ENCODE measurements at regions of chr11 and their contacts with region 1.

Region 1: GRCh38 chr11:71448257-71449171 is at the start of gene DHCR7:
- DNase-seq: peak; percentile 81 to 96 (median 88)
- ATAC-seq: peak; percentile 85
- H3K4me3 ChIP-seq: peak within 1 kb of the TSS; percentile 86
- H3K4me3 Mint-ChIP-seq: peak within 1 kb of the TSS; percentile 89 to 98 (median 94)
- H3K27ac ChIP-seq: peak within 1 kb of the TSS; percentile 92
- H3K27ac Mint-ChIP-seq: peak within 1 kb of the TSS; percentile 88 to 99 (median 95)
- H3K4me1 ChIP-seq: peaks cover 27 to 37% of the 10 kb centered on the region in 2 donors
- H3K4me1 Mint-ChIP-seq: peaks cover 27 to 58% (median 49%) of the 10 kb centered on the region in 7 donors
- H3K27me3 ChIP-seq: no peaks in the 10 kb centered on the region
- H3K27me3 Mint-ChIP-seq: no peaks in the 10 kb centered on the region
- total RNA-seq, gene DHCR7: 14.7 to 46.1 (median 19.6) TPM

Region 2: DNA sequence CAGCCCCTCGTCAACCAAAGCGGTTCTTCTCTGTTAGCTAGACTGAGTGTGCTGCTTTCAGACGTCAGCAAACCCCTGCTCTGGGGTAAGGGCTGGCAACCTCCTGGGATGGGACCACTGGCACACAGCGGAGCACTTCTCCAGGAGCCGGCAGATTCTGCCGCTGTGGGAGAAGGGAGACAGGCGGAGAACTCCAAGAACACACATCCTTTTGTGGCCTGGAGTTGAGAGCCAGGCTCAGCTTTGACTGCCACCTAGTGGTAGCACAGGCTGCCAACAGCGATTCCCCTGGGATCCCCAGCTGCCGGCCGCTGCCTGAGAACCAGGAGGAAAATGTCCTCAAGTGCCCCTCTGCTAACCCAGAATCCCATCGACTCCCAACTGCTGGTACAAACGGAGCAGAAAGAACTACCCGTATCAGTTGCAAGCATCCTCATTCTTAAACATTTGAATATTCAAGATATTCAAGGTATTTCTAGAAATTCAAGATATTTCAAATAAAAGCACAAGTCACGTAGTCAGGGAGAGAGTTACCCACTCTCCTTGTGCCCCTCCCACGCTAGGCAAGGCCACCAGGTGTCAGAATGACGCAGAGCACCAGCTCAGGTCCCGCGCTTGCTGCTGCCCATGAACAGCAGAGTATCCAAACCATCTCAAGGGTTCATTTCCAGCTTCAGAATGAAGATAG is 1778.2 kb before region 1 on chr11:
- CTCF ChIA-PET with region 1: no interaction called
- POLR2A ChIA-PET with region 1: no interaction called
- intact Hi-C with region 1: loop called (anchors 5 to 10 kb)
- DNase-seq: peak; percentile 25 to 57 (median 43)
- ATAC-seq: peak; percentile 36
- H3K4me3 ChIP-seq: no peak overlapping the region
- H3K4me3 Mint-ChIP-seq: no peak overlapping the region
- H3K27ac ChIP-seq: no peak overlapping the region
- H3K27ac Mint-ChIP-seq: peak overlapping the region in 6 of 9 donors; percentile 5 to 84 (median 65)
- H3K4me1 ChIP-seq: peaks cover 15 to 19% of the 10 kb centered on the region in 2 donors
- H3K4me1 Mint-ChIP-seq: peaks cover 24 to 42% (median 33%) of the 10 kb centered on the region in 7 donors
- H3K27me3 ChIP-seq: no peaks in the 10 kb centered on the region
- H3K27me3 Mint-ChIP-seq: peaks cover 0 to under 1% (median 0%) of the 10 kb centered on the region in 5 donors

Region 3: GRCh38 chr11:69675811-69676371 is 1772.6 kb before region 1 on chr11:
- CTCF ChIA-PET with region 1: no interaction called
- POLR2A ChIA-PET with region 1: no interaction called
- intact Hi-C with region 1: loop called (anchors 5 to 10 kb)
- DNase-seq: no peak
- ATAC-seq: no peak
- H3K4me3 ChIP-seq: peak overlapping the region; percentile 75
- H3K4me3 Mint-ChIP-seq: peak overlapping the region; percentile 91 to 97 (median 94)
- H3K27ac ChIP-seq: peak overlapping the region; percentile 85
- H3K27ac Mint-ChIP-seq: peak overlapping the region in 3 of 9 donors; percentile 90 to 95 (median 92)
- H3K4me1 ChIP-seq: peaks cover 15 to 19% of the 10 kb centered on the region in 2 donors
- H3K4me1 Mint-ChIP-seq: peaks cover 16 to 37% (median 25%) of the 10 kb centered on the region in 7 donors
- H3K27me3 ChIP-seq: no peaks in the 10 kb centered on the region
- H3K27me3 Mint-ChIP-seq: peaks cover 0 to 13% (median 0%) of the 10 kb centered on the region in 5 donors

Region 4: GRCh38 chr11:70202898-70203748 is 1245.4 kb before region 1 on chr11 and contains the start of gene FADD:
- CTCF ChIA-PET with region 1: no interaction called
- POLR2A ChIA-PET with region 1: no interaction called
- intact Hi-C with region 1: loop called in 1 of 2 experiments (anchors 2 kb)
- DNase-seq: peak; percentile 86 to 93 (median 90)
- ATAC-seq: peak; percentile 77
- H3K4me3 ChIP-seq: peak within 1 kb of the TSS; percentile 97
- H3K4me3 Mint-ChIP-seq: peak within 1 kb of the TSS; percentile 92 to 99 (median 96)
- H3K27ac ChIP-seq: peak within 1 kb of the TSS; percentile 81
- H3K27ac Mint-ChIP-seq: peak within 1 kb of the TSS; percentile 93 to 99 (median 97)
- H3K4me1 ChIP-seq: peaks cover 21 to 34% of the 10 kb centered on the region in 2 donors
- H3K4me1 Mint-ChIP-seq: peaks cover 28 to 54% (median 36%) of the 10 kb centered on the region in 7 donors
- H3K27me3 ChIP-seq: no peaks in the 10 kb centered on the region
- H3K27me3 Mint-ChIP-seq: peaks cover 0 to 6% (median 0%) of the 10 kb centered on the region in 5 donors
- total RNA-seq, gene FADD: 9.6 to 40.9 (median 38.4) TPM

Region 5: DNA sequence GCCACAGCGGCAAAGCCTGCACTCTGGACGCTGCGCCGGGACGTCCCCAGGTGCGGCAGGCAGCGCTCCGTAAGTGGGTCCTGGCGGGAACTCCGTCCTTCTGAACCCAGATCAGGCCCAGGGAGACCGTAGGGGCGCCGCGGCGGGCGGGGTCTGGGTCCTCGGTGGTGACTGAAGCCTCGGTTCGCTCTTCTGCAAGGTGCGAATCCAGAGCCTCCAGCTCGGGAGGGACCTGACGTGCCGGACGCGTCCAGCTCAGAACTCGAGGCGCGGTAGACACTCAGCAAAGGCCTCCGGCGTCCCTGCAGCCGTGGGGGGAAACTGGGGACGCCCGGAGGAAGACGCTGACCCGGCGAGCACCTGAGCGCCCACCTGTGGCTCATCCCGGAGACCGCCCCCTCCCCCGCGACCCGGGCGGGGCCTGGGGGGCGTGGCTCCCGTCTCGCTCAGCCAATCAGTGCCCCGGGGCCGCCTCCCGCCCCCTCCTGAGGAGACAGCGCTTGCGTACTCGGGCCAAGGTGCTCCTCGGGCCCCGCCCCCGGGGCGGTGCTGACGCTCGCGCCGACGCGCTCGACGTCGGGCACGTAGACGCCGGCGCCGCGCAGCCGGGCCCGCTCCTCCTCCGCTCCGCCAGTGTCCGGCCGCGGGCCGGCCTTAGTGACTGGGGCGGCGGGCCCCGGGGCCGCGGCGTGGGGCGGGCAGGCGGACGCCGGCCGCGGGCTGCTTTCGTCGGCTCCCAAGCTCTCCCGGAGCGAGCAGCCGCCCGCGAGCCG is 1178.2 kb before region 1 on chr11 and contains the start of gene PPFIA1:
- CTCF ChIA-PET with region 1: no interaction called
- POLR2A ChIA-PET with region 1: no interaction called
- intact Hi-C with region 1: loop called (anchors 2 kb)
- DNase-seq: peak; percentile 93 to 99 (median 96)
- ATAC-seq: peak; percentile 99
- H3K4me3 ChIP-seq: peak within 1 kb of the TSS; percentile 95
- H3K4me3 Mint-ChIP-seq: peak within 1 kb of the TSS; percentile 89 to 94 (median 92)
- H3K27ac ChIP-seq: peak within 1 kb of the TSS; percentile 83
- H3K27ac Mint-ChIP-seq: peak within 1 kb of the TSS; percentile 63 to 96 (median 88)
- H3K4me1 ChIP-seq: peaks cover 4 to 21% of the 10 kb centered on the region in 2 donors
- H3K4me1 Mint-ChIP-seq: peaks cover 13 to 52% (median 42%) of the 10 kb centered on the region in 7 donors
- H3K27me3 ChIP-seq: no peaks in the 10 kb centered on the region
- H3K27me3 Mint-ChIP-seq: peaks cover 8 to 31% (median 14%) of the 10 kb centered on the region in 5 donors
- total RNA-seq, gene PPFIA1: 41.5 to 71.0 (median 52.3) TPM

Region 6: GRCh38 chr11:71433648-71434450 is 14.7 kb before region 1 on chr11:
- CTCF ChIA-PET with region 1: no interaction called
- POLR2A ChIA-PET with region 1: no interaction called
- intact Hi-C with region 1: no loop called
- DNase-seq: no peak
- ATAC-seq: peak; percentile 21
- H3K4me3 ChIP-seq: no peak overlapping the region
- H3K4me3 Mint-ChIP-seq: no peak overlapping the region
- H3K27ac ChIP-seq: no peak overlapping the region
- H3K27ac Mint-ChIP-seq: no peak overlapping the region
- H3K4me1 ChIP-seq: no peaks in the 10 kb centered on the region
- H3K4me1 Mint-ChIP-seq: no peaks in the 10 kb centered on the region
- H3K27me3 ChIP-seq: no peaks in the 10 kb centered on the region
- H3K27me3 Mint-ChIP-seq: no peaks in the 10 kb centered on the region

Region 7: GRCh38 chr11:71787098-71787823 is 338.7 kb after region 1 on chr11:
- CTCF ChIA-PET with region 1: no interaction called
- POLR2A ChIA-PET with region 1: interaction called, 3 read pairs
- intact Hi-C with region 1: loop called (anchors 1 to 2 kb)
- DNase-seq: peak; percentile 86 to 96 (median 94)
- ATAC-seq: peak; percentile 98
- H3K4me3 ChIP-seq: peak overlapping the region; percentile 86
- H3K4me3 Mint-ChIP-seq: peak overlapping the region; percentile 95 to 100 (median 98)
- H3K27ac ChIP-seq: peak overlapping the region; percentile 93
- H3K27ac Mint-ChIP-seq: peak overlapping the region; percentile 88 to 99 (median 98)
- H3K4me1 ChIP-seq: no peaks in the 10 kb centered on the region
- H3K4me1 Mint-ChIP-seq: peaks cover 0 to 20% (median 12%) of the 10 kb centered on the region in 7 donors
- H3K27me3 ChIP-seq: no peaks in the 10 kb centered on the region
- H3K27me3 Mint-ChIP-seq: peaks cover 0 to 5% (median 0%) of the 10 kb centered on the region in 5 donors

Measured in naive thymus-derived CD4-positive, alpha-beta T cell (primary cell).